CD14-positive monocyte (primary cell): ENCODE measurements at regions of chr17 and their contacts with region 1.

Region 1: DNA sequence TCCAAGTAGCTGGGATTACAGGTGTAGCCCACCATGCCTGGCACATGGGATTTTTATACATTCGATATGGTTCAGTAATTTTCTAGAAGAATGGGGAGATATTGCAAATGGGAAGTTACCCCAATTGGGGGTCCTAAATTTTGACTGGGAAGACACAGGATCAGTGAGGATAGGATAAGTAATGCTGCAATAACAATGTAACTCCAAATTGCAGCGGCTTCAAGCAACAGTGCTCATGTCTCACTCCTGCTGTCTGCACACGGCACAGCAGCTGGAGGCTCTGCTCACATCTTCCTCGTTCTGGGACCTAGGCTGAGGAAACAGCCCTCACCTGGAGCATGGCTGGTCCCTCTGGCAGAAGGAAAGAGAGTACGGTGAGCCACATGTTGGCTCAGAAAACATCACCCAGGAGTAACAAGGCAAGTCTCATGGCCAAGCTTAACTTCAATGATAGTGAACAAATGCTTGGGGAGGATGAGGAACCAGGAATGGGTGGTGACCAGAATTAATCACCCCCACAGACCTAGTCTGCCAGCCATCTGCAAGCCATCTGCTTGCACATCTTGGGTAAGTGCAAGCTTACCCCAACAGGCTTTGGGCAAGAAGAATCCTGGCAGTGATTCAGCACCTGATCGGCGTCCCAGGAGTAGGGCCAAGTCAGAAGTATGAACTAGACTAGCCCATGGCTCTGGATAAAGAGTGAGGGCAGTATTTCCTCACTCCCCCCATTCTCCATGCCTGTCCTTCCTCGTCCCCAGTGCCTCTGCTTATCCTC is 229.2 kb downstream of the COPRS start:
- DNase-seq: peak in 1 of 3 donors; percentile 13
- H3K4me3 ChIP-seq: no peak overlapping the region
- H3K4me3 Mint-ChIP-seq: no peak overlapping the region
- H3K27ac ChIP-seq: no peak overlapping the region
- H3K27ac Mint-ChIP-seq: no peak overlapping the region
- H3K4me1 ChIP-seq: no peaks in the 10 kb centered on the region
- H3K4me1 Mint-ChIP-seq: no peaks in the 10 kb centered on the region
- H3K27me3 ChIP-seq: no peaks in the 10 kb centered on the region
- H3K27me3 Mint-ChIP-seq: peaks cover 2 to 6% (median 2%) of the 10 kb centered on the region in 3 donors
- CTCF ChIP-seq: no peak

Region 2: GRCh38 chr17:31570951-31571892 is 58.7 kb before region 1 on chr17:
- intact Hi-C with region 1: no loop called
- DNase-seq: no peak
- H3K4me3 ChIP-seq: no peak overlapping the region
- H3K4me3 Mint-ChIP-seq: no peak overlapping the region
- H3K27ac ChIP-seq: no peak overlapping the region
- H3K27ac Mint-ChIP-seq: peak overlapping the region in 4 of 7 donors; percentile 21 to 54 (median 32)
- H3K4me1 ChIP-seq: peaks cover 32% of the 10 kb centered on the region in 2 donors
- H3K4me1 Mint-ChIP-seq: peaks cover 31% of the 10 kb centered on the region
- H3K27me3 ChIP-seq: no peaks in the 10 kb centered on the region
- H3K27me3 Mint-ChIP-seq: no peaks in the 10 kb centered on the region
- CTCF ChIP-seq: no peak

Region 3: DNA sequence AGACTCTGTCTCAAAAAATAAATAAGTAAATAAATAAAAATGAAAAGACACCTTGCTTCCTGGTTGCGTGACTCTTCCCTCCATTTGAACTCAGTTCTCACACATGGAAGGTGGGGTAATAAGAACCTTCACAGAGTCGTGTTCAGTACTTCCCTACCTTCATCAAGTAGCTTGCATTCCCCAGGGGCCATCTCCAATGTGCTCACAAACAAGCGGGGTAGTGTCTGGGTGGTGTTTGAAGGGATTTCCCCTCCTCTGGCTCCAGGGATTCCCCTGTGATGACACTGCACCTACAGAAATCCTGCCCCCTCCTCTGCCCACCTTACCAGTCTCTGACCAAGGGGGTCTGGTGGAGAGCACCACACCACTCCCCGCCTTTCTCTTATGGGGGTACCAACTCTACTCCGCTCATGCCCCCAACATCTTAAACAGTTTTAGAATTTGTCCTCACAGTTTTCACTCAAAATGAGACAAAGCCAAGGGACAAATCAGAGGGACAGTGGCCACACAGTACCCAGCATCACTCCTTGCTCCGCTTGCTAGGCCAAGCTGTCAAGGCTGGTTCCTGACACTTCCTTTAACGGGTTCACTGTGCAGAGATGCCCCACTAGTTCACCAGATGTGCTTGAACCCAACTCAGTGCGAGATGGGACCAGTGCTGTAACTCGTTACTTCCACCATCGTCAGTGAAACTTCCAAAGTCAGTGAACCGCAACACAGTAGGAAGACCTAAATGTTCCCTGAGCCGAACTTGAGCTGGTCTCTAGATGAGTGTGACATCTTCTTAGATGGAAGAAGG is 160.0 kb after region 1 on chr17:
- intact Hi-C with region 1: loop called in 1 of 2 experiments (anchors 10 kb)
- DNase-seq: no peak
- H3K4me3 ChIP-seq: no peak overlapping the region
- H3K4me3 Mint-ChIP-seq: no peak overlapping the region
- H3K27ac ChIP-seq: no peak overlapping the region
- H3K27ac Mint-ChIP-seq: no peak overlapping the region
- H3K4me1 ChIP-seq: no peaks in the 10 kb centered on the region
- H3K4me1 Mint-ChIP-seq: no peaks in the 10 kb centered on the region
- H3K27me3 ChIP-seq: no peaks in the 10 kb centered on the region
- H3K27me3 Mint-ChIP-seq: peaks cover 0 to 5% (median 4%) of the 10 kb centered on the region in 3 donors
- CTCF ChIP-seq: no peak